Activated CD4-positive, alpha-beta T cell treated with anti-CD3 and anti-CD28 coated beads, Interleukin-2, amount 10 ng/mL, durations not matched to agents 7 days and 5 days (primary cell): ENCODE measurements at regions of chr19 and their contacts with region 1.

Region 1: GRCh38 chr19:18408053-18408476 is 10.6 kb upstream of the LRRC25 start:
- DNase-seq: peak; percentile 33
- H3K4me3 Mint-ChIP-seq: no peak overlapping the region
- H3K27ac Mint-ChIP-seq: no peak overlapping the region
- H3K4me1 Mint-ChIP-seq: peaks cover 5% of the 10 kb centered on the region
- H3K27me3 Mint-ChIP-seq: peaks cover 16% of the 10 kb centered on the region

Region 2: DNA sequence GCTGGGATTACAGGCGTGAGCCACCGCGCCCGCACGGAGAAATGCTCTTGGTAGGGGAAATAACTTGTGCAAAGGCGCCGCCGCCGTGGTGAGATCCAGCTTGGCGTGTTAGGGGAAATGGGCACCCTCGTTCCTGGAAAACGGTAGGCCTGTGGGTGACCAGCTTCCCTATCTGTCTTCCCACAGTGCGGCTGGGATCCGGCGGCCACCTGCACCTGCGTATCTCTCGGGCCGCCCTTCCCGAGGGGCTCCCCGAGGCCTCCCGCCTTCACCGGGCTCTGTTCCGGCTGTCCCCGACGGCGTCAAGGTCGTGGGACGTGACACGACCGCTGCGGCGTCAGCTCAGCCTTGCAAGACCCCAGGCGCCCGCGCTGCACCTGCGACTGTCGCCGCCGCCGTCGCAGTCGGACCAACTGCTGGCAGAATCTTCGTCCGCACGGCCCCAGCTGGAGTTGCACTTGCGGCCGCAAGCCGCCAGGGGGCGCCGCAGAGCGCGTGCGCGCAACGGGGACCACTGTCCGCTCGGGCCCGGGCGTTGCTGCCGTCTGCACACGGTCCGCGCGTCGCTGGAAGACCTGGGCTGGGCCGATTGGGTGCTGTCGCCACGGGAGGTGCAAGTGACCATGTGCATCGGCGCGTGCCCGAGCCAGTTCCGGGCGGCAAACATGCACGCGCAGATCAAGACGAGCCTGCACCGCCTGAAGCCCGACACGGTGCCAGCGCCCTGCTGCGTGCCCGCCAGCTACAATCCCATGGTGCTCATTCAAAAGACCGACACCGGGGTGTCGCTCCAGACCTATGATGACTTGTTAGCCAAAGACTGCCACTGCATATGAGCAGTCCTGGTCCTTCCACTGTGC is 19.7 kb before region 1 on chr19:
- CTCF ChIA-PET with region 1: interaction called, 10 read pairs
- POLR2A ChIA-PET with region 1: no interaction called
- DNase-seq: peak; percentile 75
- H3K4me3 Mint-ChIP-seq: peak overlapping the region; percentile 64
- H3K27ac Mint-ChIP-seq: no peak overlapping the region
- H3K4me1 Mint-ChIP-seq: peaks cover 15% of the 10 kb centered on the region
- H3K27me3 Mint-ChIP-seq: peaks cover 65% of the 10 kb centered on the region